ENCODE measurements at regions of chr20 and their contacts with region 1.

Region 1: GRCh38 chr20:51469578-51470498 is 72.7 kb downstream of the NFATC2 start:
- DNase-seq: no peak
- H3K4me3 ChIP-seq: no peak overlapping the region
- H3K27ac ChIP-seq: no peak overlapping the region
- H3K4me1 ChIP-seq: no peaks in the 10 kb centered on the region
- H3K27me3 ChIP-seq: no peaks in the 10 kb centered on the region
- CTCF ChIP-seq: no peak
- EP300 ChIP-seq: no peak
- POLR2A ChIP-seq: no peak

Region 2: GRCh38 chr20:51500311-51500710 is 30.5 kb after region 1 on chr20:
- in situ Hi-C with region 1: no loop called
- intact Hi-C with region 1: loop called (anchors 1 kb)
- DNase-seq: no peak
- H3K4me3 ChIP-seq: no peak overlapping the region
- H3K27ac ChIP-seq: no peak overlapping the region
- H3K4me1 ChIP-seq: peaks cover 0 to 11% (median 0%) of the 10 kb centered on the region in 4 donors
- H3K27me3 ChIP-seq: no peaks in the 10 kb centered on the region
- CTCF ChIP-seq: no peak
- EP300 ChIP-seq: no peak
- POLR2A ChIP-seq: no peak

Measured in transverse colon (tissue), 4 donors.